ENCODE measurements at regions of chrX and their contacts with region 1.

Region 1: DNA sequence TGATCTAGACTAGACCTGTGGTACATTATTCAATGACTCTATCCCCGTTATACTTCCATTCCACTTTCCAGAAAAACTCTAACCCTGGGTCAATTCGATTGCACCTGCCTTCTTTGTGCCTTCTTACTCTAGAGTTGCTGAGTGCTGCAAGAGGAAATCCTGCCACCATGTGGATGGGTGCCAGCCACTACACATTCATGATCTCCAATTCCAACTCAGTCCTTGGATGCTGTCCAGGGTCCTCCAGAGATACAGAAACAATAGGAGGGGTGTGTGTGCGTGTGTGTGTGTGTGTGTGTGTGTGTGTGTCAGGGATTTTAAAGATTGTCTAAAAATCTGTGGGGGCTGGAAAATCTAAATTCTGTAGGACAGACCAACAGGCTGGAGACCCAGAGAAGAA is 42.9 kb upstream of the INTS6L start:
- DNase-seq: no peak
- ATAC-seq: no peak
- H3K4me3 ChIP-seq: no peak overlapping the region
- H3K27ac ChIP-seq: no peak overlapping the region
- H3K4me1 ChIP-seq: no peaks in the 10 kb centered on the region
- H3K27me3 ChIP-seq: no peaks in the 10 kb centered on the region
- CTCF ChIP-seq: peak in 1 of 5 experiments; percentile 24
- POLR2A ChIP-seq: no peak

Region 2: DNA sequence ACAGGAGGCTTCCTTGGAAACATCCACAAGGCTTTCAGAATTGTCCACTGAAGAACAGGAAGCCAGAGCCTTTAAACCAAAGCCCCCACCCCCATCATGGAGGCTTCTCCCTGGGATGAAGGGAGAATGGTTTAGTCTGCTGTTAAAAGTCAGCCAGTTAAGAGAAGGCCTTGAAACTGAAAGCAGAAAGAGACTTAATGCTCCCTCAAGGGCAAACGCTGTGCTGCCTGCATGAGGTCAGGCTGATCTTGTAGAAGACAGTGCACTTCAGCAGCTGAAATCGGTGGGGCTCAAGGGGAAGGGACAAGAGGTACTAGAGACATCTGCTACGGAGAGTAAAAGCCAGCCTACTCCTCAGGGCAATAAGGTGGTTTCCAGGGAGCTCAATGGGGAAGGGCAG is 948.6 kb before region 1 on chrX:
- in situ Hi-C with region 1: no loop called
- intact Hi-C with region 1: no loop called
- DNase-seq: no peak
- ATAC-seq: no peak
- H3K4me3 ChIP-seq: no peak overlapping the region
- H3K27ac ChIP-seq: no peak overlapping the region
- H3K4me1 ChIP-seq: no peaks in the 10 kb centered on the region
- H3K27me3 ChIP-seq: no peaks in the 10 kb centered on the region
- CTCF ChIP-seq: no peak
- POLR2A ChIP-seq: no peak

Region 3: DNA sequence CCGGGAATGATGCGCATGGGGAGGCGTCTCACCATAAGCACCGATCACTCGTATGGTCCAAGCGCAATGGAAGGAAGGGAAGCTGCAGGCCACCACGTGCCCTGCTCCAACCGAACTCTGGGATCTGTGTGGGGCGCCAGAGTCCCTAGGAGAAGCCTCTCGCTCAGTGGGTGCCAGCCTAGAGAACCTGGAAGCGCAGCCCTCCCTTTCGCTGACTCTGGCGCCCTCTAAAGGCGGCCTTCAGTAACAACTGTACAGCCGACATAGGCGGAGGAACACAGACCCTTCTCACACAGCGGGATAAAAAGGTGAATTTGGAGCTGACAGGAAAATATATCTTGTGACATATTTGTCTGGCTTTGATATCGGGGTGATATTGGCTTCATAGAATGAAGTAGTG is 118.9 kb after region 1 on chrX:
- in situ Hi-C with region 1: loop called in 1 of 4 experiments (anchors 25 kb)
- intact Hi-C with region 1: no loop called
- DNase-seq: peak in 1 of 2 donors; percentile 8
- ATAC-seq: no peak
- H3K4me3 ChIP-seq: no peak overlapping the region
- H3K27ac ChIP-seq: no peak overlapping the region
- H3K4me1 ChIP-seq: no peaks in the 10 kb centered on the region
- H3K27me3 ChIP-seq: no peaks in the 10 kb centered on the region
- CTCF ChIP-seq: peak in 3 of 5 experiments; percentile 12 to 40 (median 27)
- POLR2A ChIP-seq: no peak